Activated CD8-positive, alpha-beta memory T cell treated with anti-CD3 and anti-CD28 coated beads, Interleukin-2, amount 10 ng/mL, durations not matched to agents 7 days and 5 days (primary cell): ENCODE measurements at regions of chr3 and their contacts with region 1.

Region 1: DNA sequence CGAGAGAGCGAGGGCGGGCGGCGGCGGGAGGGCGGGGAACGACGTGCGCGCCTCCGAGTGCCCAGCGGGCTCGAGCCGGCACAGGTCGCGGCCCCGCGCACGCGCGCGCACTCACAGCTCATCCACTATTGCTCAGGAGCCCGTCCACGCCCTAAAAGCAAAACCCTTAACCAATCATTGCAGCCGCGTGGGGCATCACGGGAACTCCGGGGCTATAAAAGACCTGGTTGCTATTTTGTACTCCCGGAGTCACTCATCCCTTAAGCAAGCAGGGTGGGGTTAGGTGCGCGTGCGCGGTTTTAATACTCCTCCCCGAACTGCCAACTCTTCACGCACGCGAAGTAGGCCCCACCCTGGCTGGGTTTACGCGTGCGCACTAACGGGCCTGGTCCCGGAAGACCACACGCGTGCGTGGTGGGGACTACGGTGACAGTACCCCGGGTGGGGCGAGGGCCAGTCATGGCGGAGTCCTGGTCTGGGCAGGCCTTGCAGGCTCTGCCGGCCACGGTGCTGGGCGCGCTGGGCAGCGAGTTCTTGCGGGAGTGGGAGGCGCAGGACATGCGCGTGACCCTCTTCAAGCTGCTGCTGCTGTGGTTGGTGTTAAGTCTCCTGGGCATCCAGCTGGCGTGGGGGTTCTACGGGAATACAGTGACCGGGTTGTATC is at the starts of genes RHOA and TCTA:
- DNase-seq: peak; percentile 99
- ATAC-seq: peak; percentile 85
- H3K4me3 Mint-ChIP-seq: peak within 1 kb of the TSS; percentile 95
- H3K27ac Mint-ChIP-seq: peak within 1 kb of the TSS; percentile 92
- H3K4me1 Mint-ChIP-seq: peaks cover 62% of the 10 kb centered on the region
- H3K27me3 Mint-ChIP-seq: no peaks in the 10 kb centered on the region
- total RNA-seq, gene RHOA: 439 to 539 TPM
- total RNA-seq, gene TCTA: 27.7 to 28.0 TPM

Region 2: DNA sequence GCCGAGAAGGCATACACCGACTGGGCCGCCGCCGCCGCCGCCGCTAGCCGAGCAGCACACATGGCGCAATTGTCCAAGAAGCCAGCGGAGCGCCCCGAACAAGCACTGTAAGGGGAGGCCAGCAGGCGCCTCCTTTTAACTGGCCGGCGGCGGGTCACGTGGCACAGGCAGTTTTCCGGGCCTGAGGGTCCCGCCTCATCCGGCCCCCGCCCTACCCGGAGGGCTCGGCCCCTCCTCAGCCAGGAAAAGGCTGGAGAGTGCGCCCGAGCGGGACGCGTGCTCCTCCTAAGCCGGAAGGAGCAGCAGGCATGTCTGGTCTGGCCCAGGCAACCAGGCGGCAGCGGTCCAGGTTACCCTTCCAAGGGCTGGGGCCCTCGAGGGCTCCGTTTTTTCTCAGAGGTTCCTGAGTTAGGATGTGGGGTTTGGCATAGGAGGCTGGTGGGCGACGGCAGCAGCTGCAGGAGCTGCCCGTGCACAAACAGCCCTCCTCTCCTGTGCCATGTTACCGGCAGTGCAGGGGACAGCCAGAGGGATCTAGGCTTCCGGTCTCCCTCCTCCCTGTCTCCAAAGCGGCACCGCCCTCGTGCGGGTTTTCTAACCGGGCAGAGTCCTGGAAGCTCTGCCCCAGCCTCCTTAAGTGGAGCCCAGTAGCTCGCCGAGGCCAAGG is 53.8 kb before region 1 on chr3 and contains the start of gene GPX1:
- CTCF ChIA-PET with region 1: no interaction called
- DNase-seq: peak; percentile 91
- ATAC-seq: peak; percentile 91
- H3K4me3 Mint-ChIP-seq: peak within 1 kb of the TSS; percentile 83
- H3K27ac Mint-ChIP-seq: peak within 1 kb of the TSS; percentile 87
- H3K4me1 Mint-ChIP-seq: peaks cover 26% of the 10 kb centered on the region
- H3K27me3 Mint-ChIP-seq: no peaks in the 10 kb centered on the region
- total RNA-seq, gene GPX1: 76.9 to 112 TPM

Region 3: DNA sequence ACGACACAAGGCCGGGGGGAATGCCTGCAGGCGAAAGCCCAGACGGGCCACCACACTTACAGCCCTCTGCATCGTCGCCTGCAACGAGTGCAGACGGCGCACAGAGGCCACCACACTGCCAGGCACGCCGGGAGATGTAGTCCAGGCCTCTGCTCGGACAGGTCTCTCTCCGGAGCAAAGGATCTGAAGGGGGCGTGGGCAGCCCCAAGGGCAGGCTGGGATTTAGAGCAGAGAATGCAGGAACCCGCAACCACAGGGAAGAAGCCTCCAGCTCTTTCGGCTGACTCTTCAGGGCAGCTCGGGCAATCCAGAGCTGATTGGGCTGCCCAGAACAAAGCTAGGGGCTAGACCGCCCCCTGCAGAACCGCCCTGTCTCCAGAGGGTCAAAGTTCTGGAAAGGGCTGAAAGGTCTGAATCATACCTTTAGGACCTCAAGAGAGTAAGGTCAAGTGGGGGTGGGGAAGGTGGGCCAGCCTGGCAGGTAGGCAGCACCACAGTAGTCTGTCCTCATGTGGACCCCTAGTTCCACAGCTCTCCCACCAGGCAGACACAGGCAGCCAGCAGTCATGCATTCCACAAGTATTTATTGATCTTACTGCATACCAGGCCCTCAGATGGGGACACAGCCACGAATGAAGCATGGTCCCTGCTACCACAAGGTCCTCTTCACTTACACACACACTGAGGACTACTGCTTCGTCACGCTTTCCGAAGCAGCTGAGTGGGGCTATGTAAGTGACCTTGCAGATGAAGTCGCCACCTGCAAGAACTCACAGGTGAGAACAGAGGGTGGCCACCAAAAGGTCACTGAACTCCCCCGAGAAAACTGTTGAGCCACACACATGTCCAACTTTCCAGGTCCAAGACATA is 10.5 kb after region 1 on chr3 and contains the start of gene AMT:
- CTCF ChIA-PET with region 1: interaction called, 11 read pairs
- DNase-seq: no peak
- ATAC-seq: no peak
- H3K4me3 Mint-ChIP-seq: no peak within 1 kb of the TSS
- H3K27ac Mint-ChIP-seq: no peak within 1 kb of the TSS
- H3K4me1 Mint-ChIP-seq: peaks cover 44% of the 10 kb centered on the region
- H3K27me3 Mint-ChIP-seq: no peaks in the 10 kb centered on the region
- total RNA-seq, gene AMT: 3.2 to 6.9 TPM

Region 4: DNA sequence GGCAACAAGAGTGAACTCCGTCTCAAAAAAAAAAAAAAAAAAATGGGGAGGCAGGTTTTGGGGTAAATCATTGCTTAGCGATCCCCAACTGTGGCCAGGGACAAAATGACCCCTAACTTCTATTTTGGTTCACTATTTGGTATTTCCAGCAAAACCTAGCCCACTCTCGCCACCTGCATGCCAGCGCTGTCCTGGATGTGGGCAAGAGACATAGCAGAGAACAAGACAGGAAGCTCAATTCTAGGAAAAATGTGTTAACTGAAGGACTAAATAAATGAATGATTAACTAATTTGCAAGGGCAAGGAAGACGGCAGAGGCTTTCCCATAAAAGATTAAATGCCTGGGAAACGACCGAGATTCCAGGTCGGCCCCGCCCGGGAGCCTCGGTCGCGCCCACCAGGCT is 16.6 kb after region 1 on chr3:
- CTCF ChIA-PET with region 1: interaction called, 13 read pairs
- DNase-seq: no peak
- ATAC-seq: peak; percentile 9
- H3K4me3 Mint-ChIP-seq: peak overlapping the region; percentile 81
- H3K27ac Mint-ChIP-seq: peak overlapping the region; percentile 93
- H3K4me1 Mint-ChIP-seq: peaks cover 30% of the 10 kb centered on the region
- H3K27me3 Mint-ChIP-seq: no peaks in the 10 kb centered on the region

Region 5: DNA sequence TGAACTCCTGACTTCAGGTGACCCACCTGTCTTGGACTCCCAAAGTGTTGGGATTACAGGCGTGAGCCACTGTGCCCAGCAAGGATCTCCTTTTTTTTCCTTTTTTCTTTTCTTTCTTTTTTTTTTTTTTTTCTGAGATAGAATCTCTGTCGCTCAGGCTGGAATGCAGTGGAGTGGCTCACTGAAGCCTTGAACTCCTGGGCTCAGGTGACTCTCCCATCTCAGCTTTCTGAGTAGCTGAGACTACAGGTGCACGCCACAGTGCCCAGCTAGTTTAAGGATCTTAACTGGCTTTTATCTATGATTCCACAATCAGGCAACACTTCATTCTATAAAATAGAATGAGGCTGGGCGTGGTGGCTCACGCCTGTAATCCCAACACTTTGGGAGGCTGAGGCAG is 33.3 kb after region 1 on chr3:
- CTCF ChIA-PET with region 1: interaction called, 43 read pairs
- DNase-seq: no peak
- ATAC-seq: no peak
- H3K4me3 Mint-ChIP-seq: no peak overlapping the region
- H3K27ac Mint-ChIP-seq: peak overlapping the region; percentile 24
- H3K4me1 Mint-ChIP-seq: peaks cover 19% of the 10 kb centered on the region
- H3K27me3 Mint-ChIP-seq: no peaks in the 10 kb centered on the region

Region 6: GRCh38 chr3:49500732-49501609 is 88.9 kb after region 1 on chr3:
- CTCF ChIA-PET with region 1: no interaction called
- DNase-seq: peak; percentile 44
- ATAC-seq: peak; percentile 42
- H3K4me3 Mint-ChIP-seq: no peak overlapping the region
- H3K27ac Mint-ChIP-seq: peak overlapping the region; percentile 3
- H3K4me1 Mint-ChIP-seq: peaks cover 15% of the 10 kb centered on the region
- H3K27me3 Mint-ChIP-seq: no peaks in the 10 kb centered on the region